GM12878 (cell line): ENCODE measurements at regions of chr4 and their contacts with region 1.

Region 1: DNA sequence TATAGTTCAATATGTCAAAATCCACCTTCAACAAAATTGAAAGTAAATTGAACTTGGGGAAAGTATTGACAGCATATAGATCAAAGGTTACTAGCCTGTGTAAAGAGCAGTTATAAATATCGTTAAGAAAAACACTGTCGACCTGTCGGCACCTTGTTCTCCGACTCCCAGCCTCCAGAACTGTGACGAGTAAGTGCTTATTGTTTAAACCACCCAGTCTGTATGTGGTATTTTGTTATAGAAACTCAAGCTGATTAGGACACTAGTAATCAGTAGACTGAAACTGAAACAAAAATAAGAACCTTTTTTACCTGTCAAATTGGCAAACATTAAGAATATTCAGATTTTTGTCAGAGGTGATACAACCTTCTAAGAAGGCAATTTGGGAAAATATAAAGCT is 17.0 kb downstream of the HTT start:
- DNase-seq: no peak
- ATAC-seq: peak; percentile 56
- H3K4me3 ChIP-seq: no peak overlapping the region
- H3K27ac ChIP-seq: no peak overlapping the region
- H3K4me1 ChIP-seq: peaks cover 6% of the 10 kb centered on the region
- H3K27me3 ChIP-seq: no peaks in the 10 kb centered on the region
- CTCF ChIP-seq: no peak
- EP300 ChIP-seq: no peak
- POLR2A ChIP-seq: no peak
- RAD21 ChIP-seq: no peak

Region 2: DNA sequence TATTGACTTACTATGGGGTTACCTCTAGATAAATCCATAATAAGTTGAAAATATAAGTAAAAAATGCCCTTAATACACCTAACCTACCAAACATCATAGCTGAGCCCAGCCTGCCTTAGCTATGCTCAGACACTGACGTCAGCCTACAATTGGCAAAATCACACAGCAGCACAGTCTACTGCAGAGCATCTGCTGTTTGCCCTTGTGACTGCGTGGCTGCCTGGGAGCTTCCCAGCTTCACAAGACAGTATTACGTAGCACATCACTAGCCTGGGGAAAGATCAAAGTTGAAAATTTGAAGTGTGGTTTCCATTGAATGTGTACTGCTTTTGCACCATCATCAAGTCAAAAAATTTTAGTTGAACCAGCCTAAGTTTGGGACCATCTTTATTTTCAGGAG is 25.9 kb before region 1 on chr4:
- CTCF ChIA-PET with region 1: no interaction called
- POLR2A ChIA-PET with region 1: no interaction called
- RAD21 ChIA-PET with region 1: no interaction called
- SMC1A ChIA-PET with region 1: no interaction called
- in situ Hi-C with region 1: no loop called
- intact Hi-C with region 1: no loop called
- DNase-seq: no peak
- ATAC-seq: no peak
- H3K4me3 ChIP-seq: no peak overlapping the region
- H3K27ac ChIP-seq: no peak overlapping the region
- H3K4me1 ChIP-seq: no peaks in the 10 kb centered on the region
- H3K27me3 ChIP-seq: no peaks in the 10 kb centered on the region
- CTCF ChIP-seq: no peak
- EP300 ChIP-seq: no peak
- POLR2A ChIP-seq: no peak
- RAD21 ChIP-seq: no peak

Region 3: DNA sequence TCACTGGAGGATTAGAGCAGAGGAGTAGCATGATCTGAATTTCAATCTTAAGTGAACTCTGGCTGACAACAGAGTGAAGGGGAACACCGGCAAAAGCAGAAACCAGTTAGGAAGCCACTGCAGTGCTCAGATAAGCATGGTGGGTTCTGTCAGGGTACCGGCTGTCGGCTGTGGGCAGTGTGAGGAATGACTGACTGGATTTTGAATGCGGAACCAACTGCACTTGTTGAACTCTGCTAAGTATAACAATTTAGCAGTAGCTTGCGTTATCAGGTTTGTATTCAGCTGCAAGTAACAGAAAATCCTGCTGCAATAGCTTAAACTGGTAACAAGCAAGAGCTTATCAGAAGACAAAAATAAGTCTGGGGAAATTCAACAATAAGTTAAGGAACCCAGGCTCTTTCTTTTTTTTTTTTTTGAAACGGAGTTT is 11.8 kb before region 1 on chr4:
- CTCF ChIA-PET with region 1: no interaction called
- POLR2A ChIA-PET with region 1: interaction called, 10 read pairs
- RAD21 ChIA-PET with region 1: interaction called, 3 read pairs
- SMC1A ChIA-PET with region 1: interaction called, 4 read pairs
- in situ Hi-C with region 1: no loop called
- intact Hi-C with region 1: no loop called
- DNase-seq: peak; percentile 54
- ATAC-seq: peak; percentile 55
- H3K4me3 ChIP-seq: peak overlapping the region; percentile 63
- H3K27ac ChIP-seq: peak overlapping the region; percentile 94
- H3K4me1 ChIP-seq: peaks cover 36% of the 10 kb centered on the region
- H3K27me3 ChIP-seq: no peaks in the 10 kb centered on the region
- CTCF ChIP-seq: no peak
- EP300 ChIP-seq: no peak
- POLR2A ChIP-seq: peak; percentile 43; the same call in 1 of the 2 replicates
- RAD21 ChIP-seq: no peak

Region 4: GRCh38 chr4:3128976-3129375 is 37.5 kb after region 1 on chr4:
- CTCF ChIA-PET with region 1: no interaction called
- POLR2A ChIA-PET with region 1: no interaction called
- RAD21 ChIA-PET with region 1: no interaction called
- SMC1A ChIA-PET with region 1: no interaction called
- in situ Hi-C with region 1: no loop called
- intact Hi-C with region 1: no loop called
- DNase-seq: no peak
- ATAC-seq: no peak
- H3K4me3 ChIP-seq: no peak overlapping the region
- H3K27ac ChIP-seq: no peak overlapping the region
- H3K4me1 ChIP-seq: no peaks in the 10 kb centered on the region
- H3K27me3 ChIP-seq: no peaks in the 10 kb centered on the region
- CTCF ChIP-seq: no peak
- EP300 ChIP-seq: no peak
- POLR2A ChIP-seq: no peak
- RAD21 ChIP-seq: no peak